Activated CD4-positive, alpha-beta memory T cell treated with anti-CD3 and anti-CD28 coated beads for 36 hours (primary cell): ENCODE measurements at regions of chr4 and their contacts with region 1.

Region 1: DNA sequence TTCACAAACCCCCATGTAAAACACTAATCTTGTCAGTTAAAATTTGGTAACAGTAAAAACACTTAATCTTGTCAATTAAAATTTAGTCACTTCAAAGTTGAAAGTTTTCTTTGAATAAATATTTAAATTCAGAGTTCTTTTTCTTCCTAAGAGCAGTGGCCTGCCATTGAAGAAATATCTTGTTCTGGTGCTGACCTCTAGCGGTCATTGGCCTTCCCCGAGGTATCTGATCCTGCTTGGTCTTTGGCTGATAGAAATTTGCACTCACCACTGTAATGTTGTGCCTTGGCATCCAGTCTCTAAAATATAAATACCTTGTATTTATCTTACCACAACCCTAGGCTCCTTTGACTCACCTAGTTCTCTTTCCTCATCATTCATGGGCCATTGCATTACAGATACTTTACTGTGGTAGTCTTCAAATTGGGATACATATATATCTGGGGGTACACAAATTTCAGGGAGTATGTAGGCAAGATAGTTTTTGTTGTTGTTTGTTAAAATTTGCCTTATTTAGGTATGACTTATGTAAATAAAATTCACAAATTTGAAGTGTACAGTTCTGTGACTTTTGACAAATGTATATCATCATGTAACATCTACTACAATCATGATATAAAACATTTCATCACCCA is 6.7 kb upstream of the ART3 start:
- DNase-seq: peak; percentile 79
- H3K4me3 Mint-ChIP-seq: no peak overlapping the region
- H3K27ac Mint-ChIP-seq: no peak overlapping the region
- H3K4me1 Mint-ChIP-seq: no peaks in the 10 kb centered on the region
- H3K27me3 Mint-ChIP-seq: no peaks in the 10 kb centered on the region

Region 2: GRCh38 chr4:75940692-75941253 is 127.0 kb before region 1 on chr4 and contains the start of gene NAAA:
- CTCF ChIA-PET with region 1: interaction called, 3 read pairs
- POLR2A ChIA-PET with region 1: no interaction called
- intact Hi-C with region 1: loop called (anchors 5 kb)
- DNase-seq: peak; percentile 91
- H3K4me3 Mint-ChIP-seq: peak within 1 kb of the TSS; percentile 96
- H3K27ac Mint-ChIP-seq: peak within 1 kb of the TSS; percentile 93
- H3K4me1 Mint-ChIP-seq: peaks cover 20% of the 10 kb centered on the region
- H3K27me3 Mint-ChIP-seq: no peaks in the 10 kb centered on the region
- total RNA-seq, gene NAAA: 31.7 to 32.2 TPM